A673 (cell line): ENCODE measurements at regions of chr1 and their contacts with region 1.

Region 1: DNA sequence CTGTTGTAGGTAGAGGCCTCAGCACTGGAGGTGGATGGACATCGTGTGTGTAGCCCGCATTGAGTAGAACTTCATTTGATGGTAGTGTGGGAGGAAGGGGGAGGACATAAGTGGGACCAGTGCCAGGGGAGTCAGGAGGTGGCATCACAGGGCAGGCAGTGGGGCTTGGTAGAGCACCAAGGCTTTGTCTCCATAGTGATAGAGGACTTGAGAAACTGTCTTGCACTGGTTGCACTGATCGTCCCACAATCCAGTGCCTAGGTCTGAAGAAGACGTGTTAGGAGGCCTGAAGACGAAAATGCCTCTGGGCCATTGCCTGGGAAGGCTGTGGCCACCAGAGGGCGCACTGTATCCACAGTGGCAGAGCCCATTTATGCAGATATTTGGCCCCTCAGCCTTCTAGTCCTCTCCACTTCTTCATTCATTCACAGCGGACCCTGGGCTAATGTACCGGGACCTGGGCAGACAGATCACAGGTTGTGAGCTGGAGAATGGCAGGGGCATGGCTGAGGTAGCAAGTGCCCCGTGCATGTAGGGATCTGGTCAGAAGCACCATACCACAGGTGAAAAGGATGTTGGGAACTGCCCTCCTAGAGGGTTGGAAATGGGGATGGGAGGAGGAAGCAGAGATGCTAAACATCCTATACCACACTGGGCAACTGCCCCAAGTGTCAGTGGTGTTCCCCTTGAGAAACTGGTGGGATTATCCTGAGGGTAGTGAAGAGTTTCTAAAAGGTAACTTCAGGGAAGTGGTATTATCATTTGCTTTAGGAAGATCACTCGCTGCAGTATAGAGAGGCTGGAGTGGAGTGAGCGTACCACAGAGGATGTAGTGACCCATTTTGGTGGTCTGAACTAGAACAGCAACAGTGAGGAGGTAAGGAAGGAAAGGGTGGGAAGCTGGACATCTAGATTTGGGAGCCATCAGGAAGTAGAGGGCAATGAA is 95.3 kb downstream of the PIK3R3 start:
- DNase-seq: peak; percentile 88
- H3K4me3 ChIP-seq: no peak overlapping the region
- H3K27ac ChIP-seq: no peak overlapping the region
- H3K4me1 ChIP-seq: peaks cover 35% of the 10 kb centered on the region
- H3K27me3 ChIP-seq: no peaks in the 10 kb centered on the region
- CTCF ChIP-seq: peak; percentile 97

Region 2: GRCh38 chr1:45116340-45116739 is 920.8 kb before region 1 on chr1:
- CTCF ChIA-PET with region 1: no interaction called
- POLR2A ChIA-PET with region 1: no interaction called
- intact Hi-C with region 1: no loop called
- DNase-seq: no peak
- H3K4me3 ChIP-seq: no peak overlapping the region
- H3K27ac ChIP-seq: no peak overlapping the region
- H3K4me1 ChIP-seq: no peaks in the 10 kb centered on the region
- H3K27me3 ChIP-seq: no peaks in the 10 kb centered on the region
- CTCF ChIP-seq: no peak

Region 3: GRCh38 chr1:46132529-46133180 is 95.5 kb after region 1 on chr1 and contains the start of gene PIK3R3:
- CTCF ChIA-PET with region 1: no interaction called
- POLR2A ChIA-PET with region 1: interaction called, 7 read pairs
- intact Hi-C with region 1: loop called (anchors 5 kb)
- DNase-seq: peak; percentile 99
- H3K4me3 ChIP-seq: peak within 1 kb of the TSS; percentile 73
- H3K27ac ChIP-seq: peak within 1 kb of the TSS; percentile 100
- H3K4me1 ChIP-seq: peaks cover 27% of the 10 kb centered on the region
- H3K27me3 ChIP-seq: no peaks in the 10 kb centered on the region
- CTCF ChIP-seq: no peak
- total RNA-seq, gene PIK3R3: 30.0 and 30.2 TPM in 2 replicates

Region 4: DNA sequence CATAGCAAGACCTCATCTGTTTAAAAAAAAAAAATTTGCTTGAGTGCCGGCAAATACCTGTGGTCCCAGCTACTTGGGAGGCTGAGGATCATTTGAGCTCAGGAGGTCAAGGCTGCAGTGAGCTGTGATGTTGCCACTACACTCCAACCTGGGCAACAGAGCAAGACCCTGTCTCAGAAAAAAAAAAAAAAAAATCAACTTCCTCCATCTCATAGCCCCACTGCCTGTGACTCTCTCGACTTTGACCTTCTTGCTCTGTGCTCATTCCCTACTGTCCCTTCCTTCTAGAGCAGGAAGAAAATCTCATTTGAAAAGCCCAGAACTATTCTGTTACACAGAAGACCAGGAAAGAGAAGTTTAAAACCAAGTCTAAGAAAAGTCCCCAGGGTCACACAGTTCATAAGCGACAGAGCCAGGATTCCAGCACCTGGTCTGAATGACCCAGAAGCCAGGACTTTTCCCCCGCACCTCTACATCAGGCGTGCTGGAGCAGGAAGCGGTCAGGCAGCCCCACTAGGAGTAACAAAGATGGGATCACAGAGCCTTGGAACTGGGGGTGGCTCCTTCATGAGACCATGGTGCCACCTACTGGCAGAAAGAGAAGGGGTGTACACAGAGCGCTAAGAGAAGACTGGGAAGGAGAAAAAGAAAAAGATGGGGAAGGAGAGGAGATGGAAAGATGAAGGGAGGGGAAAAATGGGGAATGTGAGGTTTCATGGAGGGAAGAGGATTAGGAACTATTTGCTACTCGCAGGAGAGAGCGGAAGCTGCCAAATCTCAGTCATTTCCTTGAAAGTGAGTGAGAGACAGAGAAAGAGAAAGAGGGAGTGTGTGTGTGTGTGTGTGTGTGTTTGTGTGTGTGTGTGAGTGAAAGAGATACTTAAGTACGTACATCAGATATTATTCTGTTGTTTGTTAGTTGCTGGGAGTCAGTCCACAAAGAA is 142.2 kb after region 1 on chr1:
- CTCF ChIA-PET with region 1: interaction called, 6 read pairs
- POLR2A ChIA-PET with region 1: no interaction called
- intact Hi-C with region 1: loop called (anchors 1 kb)
- DNase-seq: peak; percentile 90
- H3K4me3 ChIP-seq: no peak overlapping the region
- H3K27ac ChIP-seq: no peak overlapping the region
- H3K4me1 ChIP-seq: peaks cover 22% of the 10 kb centered on the region
- H3K27me3 ChIP-seq: no peaks in the 10 kb centered on the region
- CTCF ChIP-seq: peak; percentile 98

Region 5: GRCh38 chr1:46223472-46223943 is 186.3 kb after region 1 on chr1:
- CTCF ChIA-PET with region 1: interaction called, 11 read pairs
- POLR2A ChIA-PET with region 1: no interaction called
- intact Hi-C with region 1: loop called (anchors 1 kb)
- DNase-seq: peak; percentile 86
- H3K4me3 ChIP-seq: no peak overlapping the region
- H3K27ac ChIP-seq: no peak overlapping the region
- H3K4me1 ChIP-seq: no peaks in the 10 kb centered on the region
- H3K27me3 ChIP-seq: no peaks in the 10 kb centered on the region
- CTCF ChIP-seq: peak; percentile 99